T-cell (primary cell): ENCODE measurements at regions of chr3 and their contacts with region 1.

Region 1: DNA sequence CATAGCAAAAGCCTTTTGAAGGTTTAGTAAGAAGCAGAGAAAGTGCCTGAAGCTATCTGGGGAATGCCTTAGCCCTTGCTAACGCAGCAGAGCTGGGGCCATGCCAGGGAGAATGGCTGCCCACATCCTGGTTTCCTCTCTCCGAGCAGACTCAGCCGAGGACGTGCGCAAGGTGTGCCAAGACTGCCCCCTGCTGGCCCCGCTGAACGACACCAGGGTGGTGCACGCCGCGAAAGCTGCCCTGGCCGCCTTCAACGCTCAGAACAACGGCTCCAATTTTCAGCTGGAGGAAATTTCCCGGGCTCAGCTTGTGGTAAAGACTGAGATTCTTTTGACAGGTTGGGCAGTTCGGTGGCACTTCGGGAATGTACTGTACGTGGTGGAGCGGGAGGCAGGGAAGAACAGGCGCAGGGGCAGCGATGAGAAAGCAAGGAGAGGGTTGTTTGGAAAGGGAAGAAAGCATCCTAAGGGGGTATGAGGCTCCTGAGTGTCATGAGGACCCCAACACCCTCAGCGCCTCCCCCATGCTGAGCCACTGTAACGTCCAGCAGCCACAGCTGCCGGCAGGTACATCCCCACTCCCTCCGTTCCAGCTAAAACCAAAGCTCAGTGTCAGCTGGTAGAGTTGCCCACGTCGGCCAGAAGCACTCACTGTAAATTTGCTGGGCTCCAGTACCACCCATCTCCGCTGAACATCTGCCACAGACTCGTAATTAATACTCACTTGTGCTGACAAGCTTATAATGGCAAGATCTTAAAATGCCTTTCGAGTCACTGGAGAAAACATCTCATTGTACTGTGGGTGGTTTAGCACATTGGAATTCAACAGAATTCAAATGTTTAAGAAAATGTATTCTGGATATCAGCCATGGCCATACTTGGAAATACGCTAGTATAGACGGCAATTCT is 4.4 kb downstream of the AHSG start:
- DNase-seq: peak; percentile 66 to 96 (median 86)
- ATAC-seq: peak; percentile 96 to 99 (median 98)
- H3K4me3 ChIP-seq: no peak overlapping the region
- H3K4me3 Mint-ChIP-seq: peak overlapping the region; percentile 51 to 68 (median 59)
- H3K27ac ChIP-seq: no peak overlapping the region
- H3K27ac Mint-ChIP-seq: peak overlapping the region; percentile 53 to 74
- H3K4me1 ChIP-seq: peaks cover 7 to 18% of the 10 kb centered on the region in 2 experiments
- H3K4me1 Mint-ChIP-seq: peaks cover 20 to 22% (median 21%) of the 10 kb centered on the region in 3 donors
- H3K27me3 ChIP-seq: peaks cover 4 to 34% of the 10 kb centered on the region in 2 experiments
- H3K27me3 Mint-ChIP-seq: peaks cover 24 to 34% of the 10 kb centered on the region in 2 donors

Region 2: GRCh38 chr3:185983495-185984141 is 633.7 kb before region 1 on chr3:
- CTCF ChIA-PET with region 1: interaction called, 7 to 10 read pairs
- POLR2A ChIA-PET with region 1: interaction called in 1 of 2 experiments, 6 read pairs
- DNase-seq: peak in 31 of 35 experiments; percentile 3 to 79 (median 34)
- ATAC-seq: peak; percentile 53 to 74 (median 72)
- H3K4me3 ChIP-seq: no peak overlapping the region
- H3K4me3 Mint-ChIP-seq: no peak overlapping the region
- H3K27ac ChIP-seq: no peak overlapping the region
- H3K27ac Mint-ChIP-seq: no peak overlapping the region
- H3K4me1 ChIP-seq: peaks cover 0 to 8% of the 10 kb centered on the region in 2 experiments
- H3K4me1 Mint-ChIP-seq: peaks cover 4 to 6% (median 4%) of the 10 kb centered on the region in 3 donors
- H3K27me3 ChIP-seq: peaks cover 0 to 10% of the 10 kb centered on the region in 2 experiments
- H3K27me3 Mint-ChIP-seq: peaks cover 8 to 14% of the 10 kb centered on the region in 2 donors

Region 3: DNA sequence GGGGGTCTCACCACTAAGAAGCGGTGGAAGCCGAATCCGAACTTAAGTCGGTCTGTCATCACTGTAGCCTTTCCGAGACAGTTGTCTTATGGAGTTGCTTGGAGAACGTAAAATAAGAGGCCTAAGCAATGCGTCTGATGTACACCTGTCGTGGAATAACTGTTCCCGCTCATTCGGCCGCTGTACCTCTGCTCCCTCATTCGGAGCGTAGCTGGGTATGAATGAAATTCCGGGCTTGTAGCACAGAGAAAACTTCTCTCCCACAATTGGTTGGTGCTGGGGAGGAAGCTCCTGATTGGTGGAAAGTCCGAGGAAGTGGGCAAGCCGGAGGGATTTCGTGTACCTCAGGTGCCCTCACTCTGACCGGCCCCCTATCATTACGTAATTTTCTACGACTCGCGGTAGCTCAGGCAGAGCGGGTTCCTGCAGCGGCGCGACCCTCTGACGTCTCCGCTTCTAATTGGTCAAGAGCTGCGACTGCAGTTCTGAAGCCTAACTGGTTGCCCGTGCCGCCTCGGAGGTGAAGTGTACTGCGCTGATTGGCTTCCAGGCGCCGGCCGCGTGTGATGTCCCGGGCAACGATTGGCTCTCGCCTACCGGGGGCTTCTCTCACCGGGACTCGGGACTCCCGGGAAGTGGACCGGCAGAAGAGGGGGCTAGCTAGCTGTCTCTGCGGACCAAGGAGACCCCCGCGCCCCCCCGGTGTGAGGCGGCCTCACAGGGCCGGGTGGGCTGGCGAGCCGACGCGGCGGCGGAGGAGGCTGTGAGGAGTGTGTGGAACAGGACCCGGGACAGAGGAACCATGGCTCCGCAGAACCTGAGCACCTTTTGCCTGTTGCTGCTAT is 47.0 kb before region 1 on chr3 and contains the start of gene DNAJB11:
- CTCF ChIA-PET with region 1: interaction called, 3 to 42 read pairs
- POLR2A ChIA-PET with region 1: interaction called in 1 of 2 experiments, 6 read pairs
- DNase-seq: peak; percentile 87 to 100 (median 99)
- ATAC-seq: peak; percentile 85 to 87 (median 86)
- H3K4me3 ChIP-seq: peak within 1 kb of the TSS; percentile 77 to 88
- H3K4me3 Mint-ChIP-seq: peak within 1 kb of the TSS; percentile 88 to 92 (median 90)
- H3K27ac ChIP-seq: peak within 1 kb of the TSS; percentile 80
- H3K27ac Mint-ChIP-seq: peak within 1 kb of the TSS; percentile 96 to 98
- H3K4me1 ChIP-seq: peaks cover 25 to 36% of the 10 kb centered on the region in 2 experiments
- H3K4me1 Mint-ChIP-seq: peaks cover 63 to 68% (median 64%) of the 10 kb centered on the region in 3 donors
- H3K27me3 ChIP-seq: no peaks in the 10 kb centered on the region
- H3K27me3 Mint-ChIP-seq: no peaks in the 10 kb centered on the region
- total RNA-seq, gene DNAJB11: 28.7 to 65.4 (median 31.7) TPM

Region 4: DNA sequence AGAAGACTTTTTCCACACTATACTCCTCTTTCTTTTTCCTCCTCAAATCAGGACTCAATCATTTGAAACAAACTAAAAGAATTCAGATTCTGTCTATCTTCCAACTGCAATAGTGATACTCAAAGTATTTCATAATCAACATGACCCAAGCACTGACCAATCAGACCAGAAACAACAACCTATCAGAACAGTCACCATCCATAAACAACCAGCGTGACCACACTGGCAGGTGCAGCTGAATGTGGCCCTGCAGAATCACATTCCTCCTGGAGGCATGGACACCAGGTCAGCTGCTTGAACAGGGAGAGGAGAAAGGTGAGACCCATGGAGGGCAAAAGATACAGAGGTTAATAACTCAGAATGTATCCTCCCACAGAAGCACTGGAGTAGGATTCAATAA is 61.9 kb after region 1 on chr3:
- CTCF ChIA-PET with region 1: no interaction called
- POLR2A ChIA-PET with region 1: no interaction called
- DNase-seq: no peak
- ATAC-seq: no peak
- H3K4me3 ChIP-seq: no peak overlapping the region
- H3K4me3 Mint-ChIP-seq: no peak overlapping the region
- H3K27ac ChIP-seq: no peak overlapping the region
- H3K27ac Mint-ChIP-seq: no peak overlapping the region
- H3K4me1 ChIP-seq: no peaks in the 10 kb centered on the region
- H3K4me1 Mint-ChIP-seq: no peaks in the 10 kb centered on the region
- H3K27me3 ChIP-seq: peaks cover 6 to 15% of the 10 kb centered on the region in 2 experiments
- H3K27me3 Mint-ChIP-seq: peaks cover 55 to 62% of the 10 kb centered on the region in 2 donors

Region 5: DNA sequence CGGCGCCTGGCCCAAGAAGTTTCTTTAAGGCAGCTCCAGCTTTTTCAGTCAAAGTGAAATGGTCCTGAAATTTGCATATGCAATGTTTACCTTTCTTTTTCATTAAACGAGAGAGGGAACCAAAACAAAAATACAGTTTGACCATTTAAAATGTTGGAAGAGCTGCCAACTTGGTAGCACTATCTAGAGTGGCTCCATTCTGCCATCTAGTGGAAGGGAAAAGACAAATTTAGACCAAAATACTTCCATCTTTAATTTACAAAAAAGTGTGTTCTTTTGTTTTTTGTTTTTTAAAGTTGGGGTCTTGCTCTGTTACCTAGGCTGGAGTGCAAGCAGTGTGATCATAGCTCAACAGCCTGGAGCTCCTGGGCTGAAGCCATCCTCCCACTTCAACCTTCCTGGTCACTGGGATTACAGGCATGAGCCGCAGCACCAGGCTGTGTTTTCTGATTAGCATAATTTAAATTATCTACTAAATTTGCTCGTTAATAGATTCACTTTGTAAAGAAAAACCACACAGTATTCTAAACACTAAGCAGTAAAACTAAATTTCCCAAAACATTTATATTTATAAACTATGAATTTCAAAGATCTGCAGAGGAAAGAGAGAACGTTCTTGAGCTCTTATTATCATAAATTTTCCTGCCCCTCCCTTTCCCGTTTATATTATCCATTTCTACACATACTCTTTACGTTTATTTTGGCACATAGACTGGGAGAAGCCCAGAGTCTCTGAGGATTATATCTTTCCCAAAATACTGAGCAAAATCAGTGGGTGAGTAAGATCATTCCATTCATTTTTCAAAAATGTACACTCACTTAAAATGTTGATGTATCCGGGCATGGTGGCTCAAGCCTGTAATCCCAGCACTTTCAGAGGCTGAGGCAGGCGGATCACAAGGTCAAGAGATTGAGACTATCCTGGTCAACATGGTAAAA is 204.4 kb after region 1 on chr3:
- CTCF ChIA-PET with region 1: interaction called, 9 to 12 read pairs
- POLR2A ChIA-PET with region 1: no interaction called
- DNase-seq: peak in 2 of 35 experiments; percentile 14 to 77
- ATAC-seq: peak in 1 of 4 experiments; percentile 48
- H3K4me3 ChIP-seq: no peak overlapping the region
- H3K4me3 Mint-ChIP-seq: no peak overlapping the region
- H3K27ac ChIP-seq: no peak overlapping the region
- H3K27ac Mint-ChIP-seq: no peak overlapping the region
- H3K4me1 ChIP-seq: peaks cover 2 to 16% of the 10 kb centered on the region in 2 experiments
- H3K4me1 Mint-ChIP-seq: peaks cover 12 to 14% (median 12%) of the 10 kb centered on the region in 3 donors
- H3K27me3 ChIP-seq: peaks cover 0 to 25% of the 10 kb centered on the region in 2 experiments
- H3K27me3 Mint-ChIP-seq: peaks cover 18 to 22% of the 10 kb centered on the region in 2 donors